ENCODE measurements at regions of chr6 and their contacts with region 1.

Region 1: GRCh38 chr6:161370880-161371279 is 97.0 kb upstream of the AGPAT4 start:
- DNase-seq: peak; percentile 71
- ATAC-seq: peak; percentile 81
- H3K4me3 ChIP-seq: no peak overlapping the region
- H3K27ac ChIP-seq: no peak overlapping the region
- H3K4me1 ChIP-seq: no peaks in the 10 kb centered on the region
- H3K27me3 ChIP-seq: no peaks in the 10 kb centered on the region
- CTCF ChIP-seq: peak; percentile 94
- POLR2A ChIP-seq: peak; percentile 29; the same call in 1 of the 2 replicates
- RAD21 ChIP-seq: peak; percentile 96

Region 2: DNA sequence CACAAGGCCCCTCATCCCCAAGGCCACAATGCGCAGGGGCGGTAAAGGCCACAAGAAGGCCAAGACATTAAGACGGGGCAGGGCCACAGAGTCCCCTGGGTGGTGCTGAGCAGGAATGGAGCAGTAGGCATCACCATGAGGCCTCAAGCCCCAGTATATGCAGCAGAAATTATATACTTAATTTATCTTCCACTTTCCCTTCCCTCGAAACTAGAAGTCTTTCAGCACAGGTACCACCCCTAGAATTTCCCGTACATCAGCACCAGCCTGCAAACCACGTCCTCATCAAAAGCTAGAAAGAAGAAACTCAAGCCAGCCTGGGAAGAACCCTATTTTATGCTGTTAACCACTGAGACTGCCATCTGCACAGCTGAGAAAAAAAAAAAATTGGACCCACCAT is 579.4 kb before region 1 on chr6:
- CTCF ChIA-PET with region 1: no interaction called
- POLR2A ChIA-PET with region 1: no interaction called
- dilution Hi-C with region 1: no loop called
- in situ Hi-C with region 1: no loop called
- intact Hi-C with region 1: loop called (anchors 5 kb)
- DNase-seq: no peak
- ATAC-seq: no peak
- H3K4me3 ChIP-seq: no peak overlapping the region
- H3K27ac ChIP-seq: no peak overlapping the region
- H3K4me1 ChIP-seq: no peaks in the 10 kb centered on the region
- H3K27me3 ChIP-seq: no peaks in the 10 kb centered on the region
- CTCF ChIP-seq: no peak
- POLR2A ChIP-seq: no peak
- RAD21 ChIP-seq: no peak

Region 3: GRCh38 chr6:160972111-160972510 is 398.8 kb before region 1 on chr6:
- CTCF ChIA-PET with region 1: no interaction called
- POLR2A ChIA-PET with region 1: no interaction called
- dilution Hi-C with region 1: no loop called
- in situ Hi-C with region 1: no loop called
- intact Hi-C with region 1: loop called (anchors 1 kb)
- DNase-seq: peak; percentile 97
- ATAC-seq: peak; percentile 62
- H3K4me3 ChIP-seq: no peak overlapping the region
- H3K27ac ChIP-seq: peak overlapping the region; percentile 72; the same call in 1 of the 2 replicates
- H3K4me1 ChIP-seq: peaks cover 25% of the 10 kb centered on the region
- H3K27me3 ChIP-seq: peaks cover 1% of the 10 kb centered on the region; the same call in 1 of the 2 replicates
- CTCF ChIP-seq: no peak
- POLR2A ChIP-seq: no peak
- RAD21 ChIP-seq: no peak

Region 4: DNA sequence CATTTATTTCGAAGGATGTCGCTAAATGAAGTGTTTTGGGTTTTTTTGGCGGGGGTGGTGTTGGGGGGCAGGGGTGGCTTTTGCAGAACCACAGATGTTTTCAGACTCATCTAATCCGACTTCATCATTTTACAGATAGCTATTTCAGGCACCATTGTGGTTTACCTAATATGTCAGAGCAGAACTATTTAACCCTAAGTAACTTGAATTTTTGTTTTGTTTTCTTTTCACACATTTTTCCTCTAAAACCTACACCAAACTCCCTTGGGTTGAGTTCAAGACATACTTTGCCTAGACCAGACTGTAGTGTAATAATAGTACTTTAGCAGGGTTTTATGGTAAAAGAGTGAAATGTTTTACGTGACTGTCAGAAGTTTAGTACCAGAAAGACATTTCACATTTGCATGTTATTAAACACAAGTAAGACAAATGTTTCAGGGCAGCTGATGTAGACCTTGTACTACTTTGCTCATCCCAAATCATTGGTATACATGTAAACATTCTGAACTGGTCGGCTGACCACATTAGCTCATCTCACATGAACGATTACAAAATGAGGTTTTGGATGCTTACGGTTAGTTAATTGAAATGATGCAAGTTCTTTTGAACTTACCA is 341.6 kb before region 1 on chr6:
- CTCF ChIA-PET with region 1: interaction called, 3 read pairs
- POLR2A ChIA-PET with region 1: no interaction called
- dilution Hi-C with region 1: no loop called
- in situ Hi-C with region 1: no loop called
- intact Hi-C with region 1: loop called (anchors 5 kb)
- DNase-seq: peak; percentile 91
- ATAC-seq: peak; percentile 80
- H3K4me3 ChIP-seq: no peak overlapping the region
- H3K27ac ChIP-seq: peak overlapping the region; percentile 37; the same call in 1 of the 2 replicates
- H3K4me1 ChIP-seq: peaks cover 6% of the 10 kb centered on the region
- H3K27me3 ChIP-seq: no peaks in the 10 kb centered on the region
- CTCF ChIP-seq: no peak
- POLR2A ChIP-seq: no peak
- RAD21 ChIP-seq: no peak

Region 5: DNA sequence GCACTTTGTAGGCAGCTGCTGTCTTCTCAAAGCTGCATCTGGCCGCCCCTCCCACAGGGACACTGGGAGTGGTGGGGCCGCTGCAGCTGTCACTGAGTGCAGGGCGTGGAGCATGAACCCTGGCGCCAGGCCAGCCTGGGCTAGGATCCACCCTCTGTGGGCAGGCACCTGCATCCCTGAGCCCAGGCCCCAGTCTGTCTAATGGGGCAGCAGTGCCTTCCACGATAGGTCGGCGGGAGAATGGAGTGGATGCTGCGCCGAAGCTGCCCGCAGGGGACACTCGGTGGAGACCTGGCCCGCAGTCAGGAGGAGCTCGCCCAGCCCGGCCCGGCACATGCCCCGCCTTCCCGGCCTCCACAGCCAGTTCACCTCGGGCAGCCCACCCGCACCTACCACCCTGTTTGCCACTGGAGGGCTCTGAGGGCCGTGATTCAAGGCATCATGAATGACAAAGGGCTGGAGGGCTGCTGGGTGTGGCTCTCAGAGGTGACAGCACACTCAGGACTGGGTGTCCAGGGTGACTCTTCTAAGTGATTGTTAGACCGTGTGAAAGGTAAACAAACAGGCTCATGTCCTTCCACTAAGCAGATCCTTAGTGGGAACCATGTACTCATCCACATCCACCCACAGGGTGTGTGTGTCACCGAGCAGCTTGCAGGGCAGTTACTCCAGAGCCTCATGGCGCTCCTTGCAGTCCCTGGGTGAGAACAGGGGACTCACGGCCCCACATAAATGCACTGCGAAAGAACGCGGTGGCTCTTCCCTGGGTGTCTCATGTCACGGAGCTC is 230.9 kb before region 1 on chr6:
- CTCF ChIA-PET with region 1: interaction called, 3 read pairs
- POLR2A ChIA-PET with region 1: no interaction called
- dilution Hi-C with region 1: no loop called
- in situ Hi-C with region 1: loop called (anchors 10 kb)
- intact Hi-C with region 1: loop called (anchors 1 kb)
- DNase-seq: peak; percentile 42
- ATAC-seq: no peak; the same call in 1 of the 2 replicates
- H3K4me3 ChIP-seq: no peak overlapping the region
- H3K27ac ChIP-seq: no peak overlapping the region
- H3K4me1 ChIP-seq: 0 out of 2 replicates have a peak, but pooled peaks cover 1% of the 10 kb centered on the region
- H3K27me3 ChIP-seq: no peaks in the 10 kb centered on the region
- CTCF ChIP-seq: no peak
- POLR2A ChIP-seq: no peak
- RAD21 ChIP-seq: 0 out of 2 replicates have a peak, but pooled peaks have one; percentile 6

Region 6: DNA sequence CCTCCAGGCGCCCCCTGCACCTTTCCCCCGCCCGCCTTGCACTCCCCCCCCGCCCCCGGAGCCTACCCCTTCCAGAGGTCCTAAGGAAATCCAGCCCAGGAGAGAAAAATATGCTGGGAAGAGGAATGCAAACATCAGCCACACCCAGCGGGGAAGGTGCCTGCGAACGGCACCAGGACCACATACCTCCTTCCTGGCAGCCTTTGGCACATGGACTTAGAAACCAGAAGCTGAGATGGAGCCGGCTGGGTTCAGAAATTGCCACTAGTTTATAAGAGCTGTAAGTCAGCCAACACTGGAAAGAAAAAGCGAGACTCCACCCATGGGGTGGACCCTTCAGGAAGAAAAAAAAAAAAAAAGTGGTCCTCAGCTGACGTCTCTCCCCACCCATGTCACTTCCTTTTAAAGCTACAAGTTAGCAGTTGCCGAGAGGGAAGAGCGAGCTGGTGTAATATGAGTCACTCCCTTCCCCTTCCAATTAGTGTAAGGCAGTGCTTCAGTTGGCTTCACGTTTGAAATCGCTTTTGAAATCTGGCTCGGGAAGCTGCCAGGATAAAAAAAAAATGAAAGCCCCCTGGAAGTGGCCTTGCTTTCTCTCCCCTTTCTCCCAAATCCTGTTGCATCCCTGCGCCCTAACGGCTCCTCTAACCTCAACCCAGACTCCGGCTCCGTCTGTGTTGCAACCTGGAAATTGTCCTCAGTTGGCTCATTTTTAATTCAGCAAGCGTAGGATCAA is 97.0 kb before region 1 on chr6 and contains the start of gene AGPAT4:
- CTCF ChIA-PET with region 1: interaction called, 3 read pairs
- POLR2A ChIA-PET with region 1: no interaction called
- dilution Hi-C with region 1: no loop called
- in situ Hi-C with region 1: no loop called
- intact Hi-C with region 1: loop called (anchors 2 kb)
- DNase-seq: peak; percentile 98
- ATAC-seq: peak; percentile 97
- H3K4me3 ChIP-seq: peak within 1 kb of the TSS; percentile 68
- H3K27ac ChIP-seq: peak within 1 kb of the TSS; percentile 70
- H3K4me1 ChIP-seq: 0 out of 2 replicates have a peak, but pooled peaks cover 1% of the 10 kb centered on the region
- H3K27me3 ChIP-seq: no peaks in the 10 kb centered on the region
- CTCF ChIP-seq: no peak
- POLR2A ChIP-seq: peak; percentile 96
- RAD21 ChIP-seq: peak; percentile 8; the same call in 1 of the 2 replicates
- total RNA-seq, gene AGPAT4: 3.6 and 3.8 TPM in 2 replicates

Region 7: GRCh38 chr6:161596807-161597520 is 226.1 kb after region 1 on chr6:
- CTCF ChIA-PET with region 1: no interaction called
- POLR2A ChIA-PET with region 1: no interaction called
- dilution Hi-C with region 1: no loop called
- in situ Hi-C with region 1: no loop called
- intact Hi-C with region 1: no loop called
- DNase-seq: no peak
- ATAC-seq: no peak
- H3K4me3 ChIP-seq: no peak overlapping the region
- H3K27ac ChIP-seq: no peak overlapping the region
- H3K4me1 ChIP-seq: no peaks in the 10 kb centered on the region
- H3K27me3 ChIP-seq: no peaks in the 10 kb centered on the region
- CTCF ChIP-seq: no peak
- POLR2A ChIP-seq: no peak
- RAD21 ChIP-seq: no peak

Region 8: GRCh38 chr6:161660666-161661571 is 290.0 kb after region 1 on chr6:
- CTCF ChIA-PET with region 1: no interaction called
- POLR2A ChIA-PET with region 1: no interaction called
- dilution Hi-C with region 1: no loop called
- in situ Hi-C with region 1: no loop called
- intact Hi-C with region 1: no loop called
- DNase-seq: no peak
- ATAC-seq: no peak
- H3K4me3 ChIP-seq: no peak overlapping the region
- H3K27ac ChIP-seq: no peak overlapping the region
- H3K4me1 ChIP-seq: no peaks in the 10 kb centered on the region
- H3K27me3 ChIP-seq: no peaks in the 10 kb centered on the region
- CTCF ChIP-seq: no peak
- POLR2A ChIP-seq: no peak
- RAD21 ChIP-seq: no peak

Measured in IMR-90 (cell line).